Right lobe of liver (tissue), 6 donors: ENCODE measurements at regions of chr9 and their contacts with region 1.

Region 1: DNA sequence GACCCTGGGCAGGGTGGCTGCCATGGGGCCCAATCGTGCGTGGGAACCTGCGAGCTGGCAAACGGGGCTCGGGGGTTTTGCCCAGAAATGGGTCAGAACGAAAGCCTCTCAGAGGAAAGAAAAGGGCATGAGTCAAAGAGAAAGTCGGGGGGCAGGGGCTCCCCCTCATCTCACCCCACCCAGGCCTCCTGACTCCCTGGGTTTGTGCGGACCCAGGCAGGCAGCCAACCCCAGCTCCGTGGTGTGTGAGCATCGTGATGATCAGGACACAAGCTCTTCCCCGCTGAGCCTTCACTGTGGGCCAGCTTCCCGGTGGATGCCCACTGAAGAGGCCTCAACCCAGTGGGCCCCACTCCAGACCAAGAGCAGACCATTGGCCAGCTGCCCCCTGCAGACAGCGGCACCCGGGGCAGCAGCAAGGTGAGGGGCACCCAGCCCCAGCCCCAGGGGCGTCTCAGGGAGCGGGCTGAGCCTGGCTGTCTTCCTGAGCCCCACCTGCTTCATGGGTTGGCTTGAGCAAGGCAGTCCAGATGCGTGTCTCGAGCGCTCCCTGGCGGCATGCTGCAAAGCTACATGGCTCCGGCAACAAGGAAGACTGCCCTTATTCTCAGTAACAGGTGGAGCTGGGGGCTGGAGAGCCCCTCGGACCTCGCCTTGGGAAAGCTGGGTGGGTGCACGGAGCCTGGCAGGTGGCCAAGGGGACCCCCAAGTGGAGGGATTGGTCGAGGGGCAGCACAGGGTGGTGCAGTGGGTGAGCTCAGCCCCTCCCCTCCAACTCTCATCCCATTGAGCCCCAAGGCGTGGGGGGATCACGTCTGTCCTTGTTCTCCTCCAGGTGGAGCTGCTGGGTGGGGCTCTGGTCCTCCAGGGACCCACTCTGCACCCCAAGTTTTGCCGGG is 3.2 kb upstream of the FUT7 start:
- DNase-seq: peak; percentile 83 to 90 (median 87)
- ATAC-seq: peak; percentile 73 to 85 (median 82)
- H3K4me3 ChIP-seq: no peak overlapping the region
- H3K27ac ChIP-seq: peak overlapping the region in 1 of 3 donors; percentile 18
- H3K4me1 ChIP-seq: peaks cover 0 to 3% (median 0%) of the 10 kb centered on the region in 4 donors
- H3K27me3 ChIP-seq: no peaks in the 10 kb centered on the region
- CTCF ChIP-seq: peak; percentile 89 to 94 (median 89)
- POLR2A ChIP-seq: no peak

Region 2: DNA sequence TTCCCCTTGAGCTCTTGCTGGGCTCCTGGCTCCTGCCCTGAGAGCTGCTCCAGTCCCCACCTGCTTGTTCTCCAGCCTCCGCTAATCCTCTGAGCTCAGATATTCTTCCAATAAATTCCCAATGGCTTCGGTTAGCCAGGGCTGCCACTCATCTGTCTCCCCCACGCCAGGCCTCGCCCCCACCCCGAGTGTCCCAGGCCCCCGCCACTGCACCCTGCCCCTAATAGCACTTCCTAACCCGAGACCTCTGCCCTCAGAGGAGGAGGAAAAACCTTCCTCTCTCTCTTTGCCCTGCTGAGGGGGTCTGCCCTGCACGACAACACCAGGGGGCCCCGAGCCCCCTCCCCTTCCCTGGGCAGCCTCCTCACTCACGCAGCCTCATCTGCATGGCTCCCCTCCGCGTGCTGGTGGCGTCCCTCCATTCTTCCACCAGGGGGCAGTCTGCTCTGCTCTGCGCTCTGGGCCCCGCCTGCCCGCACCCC is 265.4 kb before region 1 on chr9:
- intact Hi-C with region 1: loop called in 1 of 2 experiments (anchors 10 kb)
- DNase-seq: peak in 1 of 3 donors; percentile 58
- ATAC-seq: peak; percentile 38 to 71 (median 67)
- H3K4me3 ChIP-seq: no peak overlapping the region
- H3K27ac ChIP-seq: no peak overlapping the region
- H3K4me1 ChIP-seq: no peaks in the 10 kb centered on the region
- H3K27me3 ChIP-seq: no peaks in the 10 kb centered on the region
- CTCF ChIP-seq: peak in 3 of 4 donors; percentile 28 to 46 (median 39)
- POLR2A ChIP-seq: no peak

Region 3: DNA sequence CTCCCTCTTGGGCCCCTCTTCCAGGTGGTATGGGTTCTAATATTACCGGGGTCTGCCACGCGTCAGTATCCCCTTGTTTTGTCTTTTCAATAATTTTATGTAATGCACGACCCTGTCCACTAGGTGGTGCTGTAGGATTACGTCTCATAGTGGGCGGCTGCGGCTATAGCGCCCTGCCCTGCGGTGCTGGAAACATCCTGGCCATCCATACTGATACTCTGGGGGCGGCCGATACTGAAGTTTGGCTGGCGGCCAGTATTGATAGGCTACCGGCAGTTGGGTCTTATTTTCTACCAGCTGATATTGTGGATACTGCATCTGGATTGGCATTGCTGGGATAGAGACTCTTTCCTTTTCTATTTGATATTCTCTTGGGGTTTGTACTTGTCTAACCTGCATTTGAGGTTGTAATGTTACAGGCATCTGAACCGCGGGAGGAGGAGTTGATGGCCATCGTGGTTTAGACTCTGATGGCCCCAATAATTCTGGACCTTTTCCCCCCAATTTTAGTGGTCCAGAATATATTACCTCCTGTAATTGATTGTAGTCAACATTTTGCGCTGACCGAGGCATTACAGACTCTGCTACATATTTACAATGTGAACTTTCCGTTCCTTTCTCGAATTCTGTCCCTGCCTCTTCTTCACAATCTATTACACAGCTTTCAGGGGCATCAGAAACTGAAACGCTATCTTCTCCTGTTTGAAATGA is 247.3 kb before region 1 on chr9:
- intact Hi-C with region 1: loop called in 1 of 2 experiments (anchors 5 kb)
- DNase-seq: peak; percentile 73 to 77 (median 76)
- ATAC-seq: peak in 3 of 4 donors; percentile 13 to 19 (median 16)
- H3K4me3 ChIP-seq: no peak overlapping the region
- H3K27ac ChIP-seq: no peak overlapping the region
- H3K4me1 ChIP-seq: peaks cover 0 to 48% (median 18%) of the 10 kb centered on the region in 4 donors
- H3K27me3 ChIP-seq: no peaks in the 10 kb centered on the region
- CTCF ChIP-seq: peak; percentile 82 to 87 (median 84)
- POLR2A ChIP-seq: no peak

Region 4: DNA sequence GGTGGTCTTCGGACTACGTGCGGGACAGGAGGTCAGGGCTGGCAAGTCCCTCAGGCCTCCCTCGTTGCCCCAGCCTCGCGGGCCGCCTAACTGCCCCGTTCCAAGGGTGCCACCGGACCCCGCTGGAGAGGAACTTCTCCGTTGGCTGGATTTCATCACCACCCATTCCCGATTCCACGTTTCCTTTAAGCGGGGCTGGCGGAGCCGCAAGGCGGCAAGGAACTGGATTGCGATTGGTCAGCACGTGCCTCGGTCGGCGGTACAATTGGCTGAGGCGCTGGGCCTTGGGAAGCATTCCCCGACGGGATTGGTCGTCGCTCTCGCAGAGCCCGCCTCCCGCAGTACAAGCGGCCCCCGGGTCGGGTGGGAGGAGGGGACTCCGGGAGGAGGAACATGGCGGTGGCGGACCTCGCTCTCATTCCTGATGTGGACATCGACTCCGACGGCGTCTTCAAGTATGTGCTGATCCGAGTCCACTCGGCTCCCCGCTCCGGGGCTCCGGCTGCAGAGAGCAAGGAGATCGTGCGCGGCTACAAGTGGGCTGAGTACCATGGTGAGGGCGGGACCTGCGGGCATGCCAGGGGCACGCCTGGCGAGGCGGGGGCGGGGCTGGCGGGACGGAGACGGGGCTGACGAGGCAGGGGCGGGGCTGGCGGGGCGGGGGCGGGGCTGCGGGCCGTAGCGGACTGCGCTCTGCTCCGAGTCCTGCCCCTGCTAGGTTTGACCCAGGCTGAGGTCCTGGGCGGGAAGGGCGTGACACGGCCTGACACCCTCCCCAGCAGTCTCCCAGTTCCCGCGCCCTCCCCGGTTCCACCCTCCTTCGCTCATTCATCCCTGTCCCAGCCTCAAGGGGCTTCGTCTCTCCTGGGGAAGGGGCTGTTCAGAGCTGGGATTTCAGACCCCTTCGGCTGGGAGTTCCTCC is 185.8 kb before region 1 on chr9 and contains the start of gene PHPT1:
- intact Hi-C with region 1: loop called in 1 of 2 experiments (anchors 5 kb)
- DNase-seq: peak; percentile 98 to 99 (median 99)
- ATAC-seq: peak; percentile 74 to 81 (median 80)
- H3K4me3 ChIP-seq: peak within 1 kb of the TSS; percentile 61 to 84 (median 65)
- H3K27ac ChIP-seq: peak within 1 kb of the TSS; percentile 81 to 88 (median 85)
- H3K4me1 ChIP-seq: peaks cover 0 to 29% (median 15%) of the 10 kb centered on the region in 4 donors
- H3K27me3 ChIP-seq: no peaks in the 10 kb centered on the region
- CTCF ChIP-seq: no peak
- POLR2A ChIP-seq: peak; percentile 80
- total RNA-seq, gene PHPT1: 30.5 to 66.6 (median 49.3) TPM

Region 5: GRCh38 chr9:136903041-136903554 is 132.0 kb before region 1 on chr9:
- intact Hi-C with region 1: no loop called
- DNase-seq: peak in 2 of 3 donors; percentile 73 to 80
- ATAC-seq: peak; percentile 19 to 65 (median 42)
- H3K4me3 ChIP-seq: no peak overlapping the region
- H3K27ac ChIP-seq: peak overlapping the region; percentile 80 to 89 (median 84)
- H3K4me1 ChIP-seq: peaks cover 0 to 30% (median 14%) of the 10 kb centered on the region in 4 donors
- H3K27me3 ChIP-seq: no peaks in the 10 kb centered on the region
- CTCF ChIP-seq: no peak
- POLR2A ChIP-seq: no peak

Region 6: DNA sequence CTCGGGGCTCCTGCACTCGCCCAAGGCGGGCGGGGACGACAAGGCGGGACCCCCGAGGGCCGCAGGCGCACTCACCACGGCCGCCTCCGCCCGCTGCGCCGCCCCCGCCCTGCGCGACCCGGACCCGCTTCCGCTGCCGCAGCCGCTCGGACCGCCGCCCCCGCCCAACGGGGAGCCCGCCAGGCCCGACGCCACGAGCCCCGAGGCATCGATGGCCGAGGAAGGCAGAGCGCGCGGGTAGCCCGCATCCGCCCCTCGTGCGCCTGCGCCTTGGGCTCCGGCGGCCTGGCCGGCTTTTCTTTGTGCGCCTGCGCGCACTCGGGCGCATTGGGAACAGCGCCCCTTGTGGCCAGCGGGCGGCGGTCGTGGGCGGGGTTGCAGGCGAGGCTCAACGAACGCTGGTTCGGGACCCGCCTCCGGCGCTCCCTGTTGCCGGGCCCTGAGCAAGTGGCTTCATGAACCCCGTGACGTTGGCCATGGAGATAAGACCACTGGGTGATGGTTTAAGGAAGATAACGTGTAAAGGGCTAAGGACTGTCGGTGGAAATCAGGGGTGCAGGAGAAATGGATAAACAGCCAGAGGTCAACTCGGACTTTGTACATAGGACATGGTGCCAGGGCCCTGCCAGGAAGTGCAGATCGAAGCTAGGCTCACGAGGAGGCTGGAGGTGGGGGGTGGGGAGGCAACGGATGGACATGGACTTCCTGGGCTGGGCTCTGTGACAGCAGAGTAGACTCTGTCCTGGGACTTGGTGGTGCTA is 90.4 kb before region 1 on chr9 and contains the starts of genes C8G and FBXW5:
- intact Hi-C with region 1: loop called in 1 of 2 experiments (anchors 10 kb)
- DNase-seq: peak; percentile 97 to 98 (median 98)
- ATAC-seq: peak; percentile 48 to 67 (median 60)
- H3K4me3 ChIP-seq: peak within 1 kb of the TSS; percentile 72 to 94 (median 75)
- H3K27ac ChIP-seq: peak within 1 kb of the TSS; percentile 88 to 98 (median 93)
- H3K4me1 ChIP-seq: peaks cover 0 to 43% (median 22%) of the 10 kb centered on the region in 4 donors
- H3K27me3 ChIP-seq: no peaks in the 10 kb centered on the region
- CTCF ChIP-seq: peak; percentile 99 to 100 (median 99)
- POLR2A ChIP-seq: peak; percentile 93
- total RNA-seq, gene C8G: 248 to 755 (median 453) TPM
- total RNA-seq, gene FBXW5: 84.0 to 290 (median 97.4) TPM

Region 7: GRCh38 chr9:136949817-136950655 is 85.1 kb before region 1 on chr9:
- intact Hi-C with region 1: loop called (anchors 5 to 10 kb)
- DNase-seq: peak; percentile 98 to 99 (median 99)
- ATAC-seq: peak; percentile 67 to 83 (median 72)
- H3K4me3 ChIP-seq: peak overlapping the region; percentile 75 to 94 (median 78)
- H3K27ac ChIP-seq: peak overlapping the region; percentile 86 to 98 (median 89)
- H3K4me1 ChIP-seq: peaks cover 0 to 22% (median 10%) of the 10 kb centered on the region in 4 donors
- H3K27me3 ChIP-seq: no peaks in the 10 kb centered on the region
- CTCF ChIP-seq: peak in 1 of 4 donors; percentile 35
- POLR2A ChIP-seq: peak; percentile 89